Right ventricle myocardium inferior (tissue), 1 donor: ENCODE measurements at regions of chr3 and their contacts with region 1.

Region 1: DNA sequence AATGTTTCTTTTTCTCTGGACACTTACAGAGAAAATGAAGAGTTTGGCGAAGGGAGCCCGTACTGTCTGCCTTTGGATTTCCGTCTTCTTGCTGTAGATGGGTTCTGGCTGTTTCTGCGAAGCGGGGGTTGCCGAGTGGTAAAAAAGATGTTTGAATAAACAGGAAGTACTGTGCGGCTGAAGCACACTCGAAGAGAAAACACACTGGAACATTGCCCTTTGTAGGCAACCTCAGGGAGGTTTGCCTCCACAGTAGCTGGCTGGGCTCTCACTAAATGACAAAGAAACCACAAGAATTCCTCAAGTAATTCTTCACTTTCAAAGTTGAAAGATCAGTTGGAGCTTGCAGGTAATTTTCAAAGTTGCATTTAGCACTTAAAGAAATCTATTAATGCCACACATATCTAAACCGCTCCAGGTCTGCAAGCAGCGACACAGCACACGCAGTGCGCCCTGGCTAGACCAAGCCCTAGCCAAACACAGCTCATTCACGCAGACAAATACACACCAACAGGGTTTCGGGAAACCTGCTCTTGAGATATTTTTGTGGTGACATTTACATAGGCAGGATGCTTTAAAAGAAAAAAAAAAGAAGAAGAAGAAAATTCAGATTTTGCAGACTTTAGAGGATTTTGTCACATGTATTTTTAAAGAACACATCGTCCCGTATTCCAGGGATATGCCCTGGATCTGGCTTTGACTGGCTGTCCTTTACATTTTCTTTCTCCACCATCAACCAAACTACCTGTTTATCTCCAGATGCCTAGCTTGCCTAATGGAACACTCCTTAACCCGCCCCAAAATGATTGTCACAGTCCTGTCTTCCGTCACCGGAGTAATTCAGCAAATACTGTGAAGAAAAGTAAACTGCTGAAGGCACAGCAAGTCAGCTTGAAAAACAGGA is 452.8 kb downstream of the FOXP1 start:
- DNase-seq: peak; percentile 77
- ATAC-seq: peak; percentile 76

Region 2: GRCh38 chr3:70716832-70717231 is 413.9 kb before region 1 on chr3:
- intact Hi-C with region 1: loop called (anchors 10 kb)
- DNase-seq: peak; percentile 43
- ATAC-seq: no peak

Region 3: GRCh38 chr3:71006810-71007785 is 123.6 kb before region 1 on chr3:
- intact Hi-C with region 1: loop called (anchors 2 kb)
- DNase-seq: no peak
- ATAC-seq: peak; percentile 58

Region 4: GRCh38 chr3:71069797-71070196 is 60.9 kb before region 1 on chr3:
- intact Hi-C with region 1: loop called (anchors 5 kb)
- DNase-seq: peak; percentile 64
- ATAC-seq: peak; percentile 54

Region 5: GRCh38 chr3:71208211-71209108 is 77.7 kb after region 1 on chr3:
- intact Hi-C with region 1: loop called (anchors 5 kb)
- DNase-seq: no peak
- ATAC-seq: no peak